Thyroid gland (tissue), 4 donors: ENCODE measurements at regions of chr17 and their contacts with region 1.

Region 1: GRCh38 chr17:56819431-56820145 is 14.1 kb downstream of the C17orf67 start:
- DNase-seq: peak; percentile 62 to 67
- H3K4me3 ChIP-seq: no peak overlapping the region
- H3K27ac ChIP-seq: no peak overlapping the region
- H3K4me1 ChIP-seq: peaks cover 0 to 9% of the 10 kb centered on the region in 2 donors
- H3K27me3 ChIP-seq: no peaks in the 10 kb centered on the region
- CTCF ChIP-seq: peak; percentile 60 to 81 (median 77)
- POLR2A ChIP-seq: no peak

Region 2: DNA sequence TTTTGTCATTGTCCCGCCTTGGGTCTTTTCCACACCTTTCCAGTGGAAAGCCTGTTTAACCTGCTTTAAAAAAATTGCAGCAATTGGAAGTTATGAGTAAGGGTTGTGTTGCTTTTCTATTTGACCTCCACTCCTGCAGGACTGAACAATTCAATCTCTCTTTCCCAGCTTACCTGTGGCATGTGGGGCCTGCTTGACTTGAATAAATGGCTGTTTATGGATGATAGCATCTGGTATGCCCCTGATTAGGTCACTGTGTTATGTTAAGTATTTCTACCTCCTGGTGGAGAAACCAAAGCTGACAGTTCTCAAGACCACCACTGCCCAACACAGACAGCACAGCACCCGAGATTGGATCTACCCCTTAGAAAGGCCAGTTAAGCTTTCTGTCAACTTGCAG is 290.9 kb before region 1 on chr17:
- intact Hi-C with region 1: no loop called
- DNase-seq: no peak
- H3K4me3 ChIP-seq: no peak overlapping the region
- H3K27ac ChIP-seq: no peak overlapping the region
- H3K4me1 ChIP-seq: no peaks in the 10 kb centered on the region
- H3K27me3 ChIP-seq: no peaks in the 10 kb centered on the region
- CTCF ChIP-seq: no peak
- POLR2A ChIP-seq: no peak

Region 3: DNA sequence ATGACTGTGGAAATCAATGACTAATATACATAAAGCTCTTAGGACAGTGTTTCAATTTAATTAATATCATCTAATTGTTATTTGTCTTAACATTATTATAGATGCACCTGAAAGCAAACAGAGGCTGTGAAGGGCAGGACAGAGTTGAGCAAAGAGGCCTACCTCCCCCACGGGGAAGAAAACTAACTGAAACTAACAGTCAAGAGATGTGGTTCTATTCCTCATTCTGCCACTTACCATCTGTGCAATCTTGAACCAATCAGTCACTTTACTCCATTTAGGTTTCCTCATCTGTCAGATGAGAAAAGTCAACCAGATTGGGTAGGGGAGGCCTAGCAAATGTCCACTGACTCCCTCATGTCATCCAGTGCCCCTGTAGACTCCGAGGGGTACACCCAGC is 44.9 kb before region 1 on chr17:
- intact Hi-C with region 1: no loop called
- DNase-seq: no peak
- H3K4me3 ChIP-seq: no peak overlapping the region
- H3K27ac ChIP-seq: no peak overlapping the region
- H3K4me1 ChIP-seq: no peaks in the 10 kb centered on the region
- H3K27me3 ChIP-seq: no peaks in the 10 kb centered on the region
- CTCF ChIP-seq: no peak
- POLR2A ChIP-seq: no peak

Region 4: GRCh38 chr17:56939901-56940343 is 120.3 kb after region 1 on chr17:
- intact Hi-C with region 1: loop called (anchors 5 kb)
- DNase-seq: no peak
- H3K4me3 ChIP-seq: no peak overlapping the region
- H3K27ac ChIP-seq: no peak overlapping the region
- H3K4me1 ChIP-seq: no peaks in the 10 kb centered on the region
- H3K27me3 ChIP-seq: no peaks in the 10 kb centered on the region
- CTCF ChIP-seq: peak; percentile 40 to 71 (median 56)
- POLR2A ChIP-seq: no peak